ENCODE measurements at regions of chr1 and their contacts with region 1.

Region 1: GRCh38 chr1:85259118-85259911 is at the start of gene C1orf52:
- DNase-seq: no peak
- ATAC-seq: peak; percentile 96
- H3K4me3 ChIP-seq: peak within 1 kb of the TSS; percentile 99
- H3K27ac ChIP-seq: peak within 1 kb of the TSS; percentile 69
- H3K4me1 ChIP-seq: no peaks in the 10 kb centered on the region
- H3K27me3 ChIP-seq: no peaks in the 10 kb centered on the region
- CTCF ChIP-seq: peak; percentile 90 to 98 (median 95)
- EP300 ChIP-seq: no peak
- POLR2A ChIP-seq: peak; percentile 98
- RAD21 ChIP-seq: peak; percentile 62
- polyA plus RNA-seq, gene C1orf52: 9.4 to 17.1 TPM

Region 2: DNA sequence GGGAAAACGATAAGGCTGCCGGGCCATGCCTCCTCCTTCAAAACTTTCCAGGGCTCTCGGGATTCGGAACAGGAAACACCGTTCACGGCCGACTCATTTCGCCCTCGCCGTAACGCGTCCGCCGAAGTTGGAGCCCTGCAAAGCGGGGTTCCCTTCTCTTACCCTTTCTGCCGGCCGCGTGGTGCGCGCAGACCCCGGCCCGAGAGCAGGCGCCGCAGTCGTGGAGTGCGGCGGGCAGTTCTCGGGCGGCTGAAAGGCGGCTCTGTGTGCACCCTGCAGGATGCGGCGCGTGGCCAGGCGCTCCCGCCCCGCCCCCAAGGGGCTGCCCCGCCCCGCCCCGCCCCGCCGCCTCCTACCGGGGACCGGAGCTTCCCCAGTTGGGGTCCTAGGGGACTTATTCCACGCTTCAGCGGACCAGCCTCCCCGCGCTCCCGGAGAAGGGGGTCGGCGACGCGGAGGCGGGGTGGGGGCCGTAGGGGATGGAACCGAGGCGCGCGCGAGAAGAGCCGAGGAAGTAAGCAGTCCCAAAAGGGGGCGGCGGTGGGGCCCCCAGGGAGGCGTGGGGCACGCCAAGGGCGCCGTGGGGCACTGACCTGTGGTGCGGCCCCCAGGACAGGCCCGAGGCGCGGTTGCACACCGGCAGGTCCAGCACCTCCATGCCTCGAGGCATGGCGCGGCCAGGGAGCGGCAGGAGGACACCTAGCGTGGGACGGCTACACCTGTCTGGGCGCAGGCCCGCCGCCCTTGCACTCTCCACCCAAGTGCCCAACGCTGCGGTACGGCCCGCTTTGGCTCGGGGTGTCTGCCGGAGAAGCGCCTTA is 262.3 kb before region 1 on chr1 and contains the start of gene MCOLN2:
- CTCF ChIA-PET with region 1: interaction called, 8 read pairs
- POLR2A ChIA-PET with region 1: interaction called, 6 read pairs
- RAD21 ChIA-PET with region 1: no interaction called
- SMC1A ChIA-PET with region 1: no interaction called
- in situ Hi-C with region 1: no loop called
- intact Hi-C with region 1: loop called (anchors 5 kb)
- DNase-seq: no peak
- ATAC-seq: peak; percentile 71
- H3K4me3 ChIP-seq: peak within 1 kb of the TSS; percentile 95
- H3K27ac ChIP-seq: peak within 1 kb of the TSS; percentile 99
- H3K4me1 ChIP-seq: 0 out of 2 replicates have a peak, but pooled peaks cover 4% of the 10 kb centered on the region
- H3K27me3 ChIP-seq: no peaks in the 10 kb centered on the region
- CTCF ChIP-seq: 0 out of 6 replicates have a peak, but pooled peaks of 1 of the 3 experiments have one; percentile 4
- EP300 ChIP-seq: no peak
- POLR2A ChIP-seq: peak; percentile 86
- RAD21 ChIP-seq: no peak
- polyA plus RNA-seq, gene MCOLN2: 25.9 to 46.7 TPM

Region 3: GRCh38 chr1:85109475-85109874 is 149.8 kb before region 1 on chr1:
- CTCF ChIA-PET with region 1: interaction called, 22 read pairs
- POLR2A ChIA-PET with region 1: no interaction called
- RAD21 ChIA-PET with region 1: interaction called, 20 read pairs
- SMC1A ChIA-PET with region 1: interaction called, 17 read pairs
- in situ Hi-C with region 1: loop called (anchors 5 kb)
- intact Hi-C with region 1: loop called (anchors 1 kb)
- DNase-seq: no peak
- ATAC-seq: peak; percentile 78
- H3K4me3 ChIP-seq: no peak overlapping the region
- H3K27ac ChIP-seq: no peak overlapping the region
- H3K4me1 ChIP-seq: no peaks in the 10 kb centered on the region
- H3K27me3 ChIP-seq: no peaks in the 10 kb centered on the region
- CTCF ChIP-seq: peak; percentile 67 to 80 (median 74)
- EP300 ChIP-seq: no peak
- POLR2A ChIP-seq: no peak
- RAD21 ChIP-seq: peak; percentile 96

Region 4: GRCh38 chr1:85230305-85230980 is 28.9 kb before region 1 on chr1:
- CTCF ChIA-PET with region 1: interaction called, 17 read pairs
- POLR2A ChIA-PET with region 1: no interaction called
- RAD21 ChIA-PET with region 1: interaction called, 3 read pairs
- SMC1A ChIA-PET with region 1: no interaction called
- in situ Hi-C with region 1: no loop called
- intact Hi-C with region 1: no loop called
- DNase-seq: no peak
- ATAC-seq: peak; percentile 55
- H3K4me3 ChIP-seq: no peak overlapping the region
- H3K27ac ChIP-seq: no peak overlapping the region
- H3K4me1 ChIP-seq: no peaks in the 10 kb centered on the region
- H3K27me3 ChIP-seq: no peaks in the 10 kb centered on the region; a peak in 1 of 4 replicates
- CTCF ChIP-seq: peak; percentile 4 to 38 (median 29); a peak in 2 of 6 replicates
- EP300 ChIP-seq: no peak
- POLR2A ChIP-seq: no peak
- RAD21 ChIP-seq: peak; percentile 23; the same call in 1 of the 2 replicates

Region 5: DNA sequence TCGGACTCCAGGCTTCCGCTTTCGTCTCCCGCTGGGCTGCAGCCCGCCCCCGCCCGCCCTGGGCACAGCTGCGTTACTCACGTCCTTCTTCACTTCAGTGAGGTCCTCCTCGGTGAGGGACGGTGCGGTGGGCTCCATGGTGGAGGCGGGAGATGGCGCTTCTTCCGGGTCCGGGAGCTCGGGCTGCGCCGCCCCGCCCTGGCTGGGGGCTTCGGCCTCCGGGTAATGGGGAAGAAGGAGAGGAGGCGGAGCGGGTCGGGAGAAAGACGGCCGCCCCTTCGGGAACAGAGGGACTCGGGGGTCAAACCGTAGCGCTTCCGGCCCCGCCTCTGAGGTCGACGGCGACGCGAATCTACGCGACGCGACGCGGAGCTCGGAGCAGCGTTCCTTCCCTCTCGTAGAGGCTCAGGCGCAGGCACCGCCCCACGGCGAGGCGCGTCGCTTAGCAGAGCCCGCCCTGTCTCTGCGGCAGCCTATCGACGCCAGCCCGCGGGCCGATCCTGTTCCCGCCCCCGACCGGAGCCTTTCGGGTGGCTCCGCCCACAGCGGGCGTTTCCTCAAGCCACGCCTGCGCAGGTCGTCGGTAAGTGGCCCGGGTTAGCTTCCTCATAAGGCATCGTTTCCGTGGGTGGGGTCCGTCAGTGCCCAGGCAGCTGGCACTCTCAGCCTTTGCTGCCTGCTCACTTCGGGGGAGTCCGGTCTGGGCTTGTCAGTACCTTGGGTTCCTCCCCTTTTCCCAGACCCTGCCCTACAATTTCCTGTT is 17.1 kb after region 1 on chr1 and contains the start of gene BCL10:
- CTCF ChIA-PET with region 1: interaction called, 229 read pairs
- POLR2A ChIA-PET with region 1: interaction called, 61 read pairs
- RAD21 ChIA-PET with region 1: interaction called, 30 read pairs
- SMC1A ChIA-PET with region 1: interaction called, 110 read pairs
- in situ Hi-C with region 1: no loop called
- intact Hi-C with region 1: loop called (anchors 1 kb)
- DNase-seq: peak; percentile 97
- ATAC-seq: peak; percentile 97
- H3K4me3 ChIP-seq: peak within 1 kb of the TSS; percentile 87
- H3K27ac ChIP-seq: peak within 1 kb of the TSS; percentile 94
- H3K4me1 ChIP-seq: peaks cover 4% of the 10 kb centered on the region
- H3K27me3 ChIP-seq: no peaks in the 10 kb centered on the region
- CTCF ChIP-seq: no peak
- EP300 ChIP-seq: no peak
- POLR2A ChIP-seq: peak; percentile 83
- RAD21 ChIP-seq: no peak
- polyA plus RNA-seq, gene BCL10: 16.7 to 19.0 TPM

Measured in GM12878 (cell line).